ENCODE measurements at regions of chr3 and their contacts with region 1.

Region 1: GRCh38 chr3:41961750-41962679 is at the start of gene ULK4:
- DNase-seq: peak; percentile 96
- ATAC-seq: peak; percentile 91
- H3K4me3 Mint-ChIP-seq: peak within 1 kb of the TSS; percentile 95
- H3K27ac Mint-ChIP-seq: peak within 1 kb of the TSS; percentile 92
- H3K4me1 Mint-ChIP-seq: peaks cover 13% of the 10 kb centered on the region
- H3K27me3 Mint-ChIP-seq: no peaks in the 10 kb centered on the region
- total RNA-seq, gene ULK4: 13.1 to 14.2 TPM

Region 2: GRCh38 chr3:40309418-40309924 is 1652.5 kb before region 1 on chr3 and contains the start of gene EIF1B:
- CTCF ChIA-PET with region 1: no interaction called
- POLR2A ChIA-PET with region 1: no interaction called
- intact Hi-C with region 1: loop called in 1 of 2 experiments (anchors 1 kb)
- DNase-seq: peak; percentile 99
- ATAC-seq: peak; percentile 92
- H3K4me3 Mint-ChIP-seq: peak within 1 kb of the TSS; percentile 100
- H3K27ac Mint-ChIP-seq: peak within 1 kb of the TSS; percentile 99
- H3K4me1 Mint-ChIP-seq: peaks cover 25% of the 10 kb centered on the region
- H3K27me3 Mint-ChIP-seq: no peaks in the 10 kb centered on the region
- total RNA-seq, gene EIF1B: 35.1 to 39.2 TPM

Region 3: DNA sequence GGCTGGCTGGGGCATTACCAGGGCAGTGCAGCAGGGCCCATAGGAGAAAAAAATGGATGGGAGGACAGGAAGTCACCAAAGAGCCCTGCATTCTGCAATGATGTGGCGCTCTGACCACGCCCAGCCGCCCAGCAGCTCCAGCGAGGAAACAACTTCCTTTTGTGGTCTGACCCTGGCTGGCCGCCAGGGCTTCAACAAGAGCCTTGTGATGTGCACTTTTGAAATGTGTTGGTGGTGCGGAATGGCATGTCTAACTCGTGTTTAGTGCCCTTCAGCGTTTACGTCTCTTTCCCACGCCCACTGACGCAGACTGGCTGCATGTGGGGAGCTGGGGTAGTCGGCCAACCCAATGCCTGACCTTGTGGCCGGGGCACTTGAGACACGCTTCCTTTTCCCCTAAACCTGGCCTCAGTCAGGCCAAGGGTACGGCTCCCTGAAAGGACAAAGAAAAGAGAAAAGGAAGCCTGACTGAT is 844.6 kb before region 1 on chr3:
- CTCF ChIA-PET with region 1: no interaction called
- POLR2A ChIA-PET with region 1: no interaction called
- intact Hi-C with region 1: loop called in 1 of 2 experiments (anchors 5 kb)
- DNase-seq: peak; percentile 94
- ATAC-seq: peak; percentile 96
- H3K4me3 Mint-ChIP-seq: peak overlapping the region; percentile 2
- H3K27ac Mint-ChIP-seq: peak overlapping the region; percentile 86
- H3K4me1 Mint-ChIP-seq: peaks cover 28% of the 10 kb centered on the region
- H3K27me3 Mint-ChIP-seq: no peaks in the 10 kb centered on the region

Region 4: DNA sequence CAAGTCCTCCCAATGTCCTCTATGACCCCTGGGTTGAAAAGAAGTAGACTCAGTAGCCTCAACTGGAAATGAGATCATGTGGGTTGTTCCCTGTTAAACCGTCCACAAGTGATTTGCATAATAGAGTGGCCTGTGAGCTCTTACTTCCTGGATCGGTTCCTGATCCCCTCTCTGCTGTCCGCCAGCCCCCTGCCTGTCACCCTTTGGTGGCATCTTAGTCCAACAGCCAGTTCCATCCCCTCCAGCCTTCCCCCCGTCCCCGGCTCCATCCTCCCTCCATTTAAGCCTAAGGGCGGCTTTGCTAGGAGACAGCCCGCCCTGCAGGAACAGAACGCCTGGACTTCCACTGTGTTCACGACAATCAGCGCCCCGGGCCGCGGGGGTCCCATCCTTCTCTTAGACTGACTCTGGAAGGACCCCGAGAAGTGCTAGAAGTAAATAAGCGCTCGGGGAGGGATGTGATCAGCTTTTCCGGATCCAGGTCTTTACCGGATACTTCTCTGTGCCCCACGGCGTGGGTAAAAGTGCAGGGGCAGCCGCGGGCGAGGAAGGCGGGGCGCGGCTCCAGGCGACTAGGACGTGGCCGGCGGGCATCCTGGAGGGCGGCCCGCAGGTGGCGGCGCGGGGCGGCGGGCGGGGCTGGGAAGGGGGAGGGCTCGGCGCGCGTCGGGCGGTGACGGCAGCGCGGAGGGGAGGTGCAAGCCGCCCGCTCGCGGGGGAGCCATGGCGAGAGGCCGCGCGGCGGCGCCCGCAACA is 51.1 kb after region 1 on chr3:
- CTCF ChIA-PET with region 1: no interaction called
- POLR2A ChIA-PET with region 1: interaction called, 4 read pairs
- intact Hi-C with region 1: loop called (anchors 1 kb)
- DNase-seq: peak; percentile 88
- ATAC-seq: peak; percentile 75
- H3K4me3 Mint-ChIP-seq: peak overlapping the region; percentile 90
- H3K27ac Mint-ChIP-seq: peak overlapping the region; percentile 92
- H3K4me1 Mint-ChIP-seq: peaks cover 46% of the 10 kb centered on the region
- H3K27me3 Mint-ChIP-seq: no peaks in the 10 kb centered on the region

Region 5: DNA sequence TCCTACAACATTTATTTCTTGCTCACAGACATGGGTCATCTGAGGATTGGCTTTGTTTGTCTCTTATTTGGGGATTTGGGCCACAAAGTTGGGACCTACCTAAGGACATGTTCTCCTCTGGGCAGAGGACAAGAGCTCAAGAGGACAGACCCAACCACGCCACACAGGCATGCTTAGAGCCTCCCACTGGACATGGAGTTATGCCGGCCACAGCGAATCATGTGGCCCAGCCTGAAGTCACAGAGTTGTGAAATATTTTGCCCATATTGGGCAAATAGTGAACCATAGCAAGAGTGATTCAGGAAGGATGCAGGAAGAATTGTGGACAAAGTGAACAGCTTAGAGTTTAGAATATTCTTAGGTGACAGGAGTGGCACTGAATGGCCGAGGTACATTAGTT is 139.0 kb after region 1 on chr3:
- CTCF ChIA-PET with region 1: interaction called, 7 read pairs
- POLR2A ChIA-PET with region 1: no interaction called
- intact Hi-C with region 1: loop called (anchors 2 to 5 kb)
- DNase-seq: no peak
- ATAC-seq: no peak
- H3K4me3 Mint-ChIP-seq: no peak overlapping the region
- H3K27ac Mint-ChIP-seq: no peak overlapping the region
- H3K4me1 Mint-ChIP-seq: peaks cover 14% of the 10 kb centered on the region
- H3K27me3 Mint-ChIP-seq: no peaks in the 10 kb centered on the region

Region 6: DNA sequence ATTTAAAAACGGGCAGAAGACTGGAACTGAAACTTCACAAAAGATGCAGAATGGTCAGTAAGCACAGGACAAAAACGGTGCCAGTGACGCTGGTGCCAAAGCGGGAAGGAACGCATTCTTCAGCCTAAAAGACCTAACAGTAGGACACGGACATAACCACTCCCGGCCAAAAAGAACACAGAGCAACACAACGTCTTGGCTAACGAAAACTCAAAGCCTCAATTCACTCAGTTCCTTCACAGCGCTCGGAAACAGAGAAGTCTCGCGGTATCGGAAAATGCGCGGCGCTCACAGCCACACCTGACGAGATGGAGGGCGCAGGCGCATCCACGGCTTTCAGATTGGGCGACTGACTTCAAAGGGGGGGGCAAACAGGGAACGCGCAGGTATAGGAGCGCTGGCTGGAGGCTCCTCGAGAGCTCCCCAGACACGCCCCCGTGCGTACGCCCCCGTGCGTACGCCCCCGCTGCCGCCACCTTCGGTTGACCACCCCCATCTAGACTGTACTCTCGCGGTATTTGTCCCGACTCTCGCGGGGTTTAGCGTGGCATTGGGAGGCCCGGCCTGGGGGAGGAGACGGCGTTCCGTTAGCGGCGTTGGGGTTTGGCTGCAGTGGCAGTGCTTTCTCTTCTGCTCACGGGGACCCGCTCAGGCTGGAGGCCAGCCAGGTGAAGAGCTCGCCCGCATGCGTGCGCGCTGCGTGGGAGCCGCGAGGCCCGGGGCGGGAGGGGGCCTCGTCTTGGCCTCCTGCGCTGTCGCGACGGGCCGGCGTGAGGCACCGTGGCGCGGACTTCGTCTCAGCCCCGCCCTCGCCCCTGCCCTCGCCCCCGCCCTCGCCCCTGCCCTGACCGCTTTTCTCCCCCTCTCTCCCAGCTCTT is 638.3 kb after region 1 on chr3 and contains the start of gene NKTR:
- CTCF ChIA-PET with region 1: no interaction called
- POLR2A ChIA-PET with region 1: no interaction called
- intact Hi-C with region 1: loop called in 1 of 2 experiments (anchors 1 kb)
- DNase-seq: peak; percentile 100
- ATAC-seq: peak; percentile 91
- H3K4me3 Mint-ChIP-seq: peak within 1 kb of the TSS; percentile 80
- H3K27ac Mint-ChIP-seq: peak within 1 kb of the TSS; percentile 95
- H3K4me1 Mint-ChIP-seq: peaks cover 33% of the 10 kb centered on the region
- H3K27me3 Mint-ChIP-seq: no peaks in the 10 kb centered on the region
- total RNA-seq, gene NKTR: 50.8 to 59.2 TPM

Measured in activated CD4-positive, alpha-beta T cell treated with anti-CD3 and anti-CD28 coated beads for 36 hours (primary cell).